KBM-7 (cell line): ENCODE measurements at regions of chr11 and their contacts with region 1.

Region 1: GRCh38 chr11:27183672-27184457 is 143.2 kb downstream of the BBOX1 start:
- DNase-seq: peak; percentile 63

Region 2: GRCh38 chr11:26931248-26931631 is 252.6 kb before region 1 on chr11:
- in situ Hi-C with region 1: no loop called
- DNase-seq: no peak

Region 3: DNA sequence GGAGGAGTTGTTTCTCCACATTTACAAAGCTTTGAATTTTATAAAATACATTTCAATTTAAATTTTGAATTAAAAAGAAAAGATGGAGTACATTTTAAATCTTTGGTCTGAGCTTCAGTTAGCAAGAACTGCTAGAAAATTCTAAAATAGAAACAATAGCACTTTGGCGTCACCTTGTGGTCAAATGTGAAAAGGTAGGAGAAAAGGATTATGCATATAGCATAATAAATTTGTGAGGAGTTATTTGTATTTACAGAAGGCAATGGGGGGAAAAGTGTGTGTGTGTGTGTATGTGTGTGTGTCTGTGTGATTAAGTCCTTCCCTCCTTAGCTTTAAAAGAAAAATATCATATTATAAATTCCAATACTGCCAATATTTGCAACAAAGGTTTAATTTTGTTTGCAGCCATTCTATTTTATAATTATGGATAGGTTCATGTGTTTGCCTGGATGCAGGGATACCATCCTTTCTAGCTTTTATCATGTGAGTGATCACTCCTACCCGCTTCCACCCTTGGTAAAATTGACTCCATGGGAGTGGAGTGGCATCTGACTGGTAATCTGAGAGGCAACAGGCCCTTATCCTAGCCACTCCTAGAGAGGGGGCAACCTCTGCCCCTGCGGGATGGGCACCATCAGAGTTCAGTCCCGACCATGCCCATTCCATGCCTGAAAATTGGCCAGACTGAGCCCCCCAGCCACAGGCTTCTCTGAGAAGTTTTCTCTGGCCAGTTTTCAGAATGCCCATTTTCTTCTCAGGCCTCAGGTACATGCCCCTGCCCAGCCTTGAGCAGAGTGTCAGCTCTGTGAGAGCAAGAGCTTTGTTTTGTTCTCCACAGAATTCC is 302.3 kb after region 1 on chr11:
- in situ Hi-C with region 1: loop called (anchors 25 kb)
- DNase-seq: peak; percentile 70

Region 4: DNA sequence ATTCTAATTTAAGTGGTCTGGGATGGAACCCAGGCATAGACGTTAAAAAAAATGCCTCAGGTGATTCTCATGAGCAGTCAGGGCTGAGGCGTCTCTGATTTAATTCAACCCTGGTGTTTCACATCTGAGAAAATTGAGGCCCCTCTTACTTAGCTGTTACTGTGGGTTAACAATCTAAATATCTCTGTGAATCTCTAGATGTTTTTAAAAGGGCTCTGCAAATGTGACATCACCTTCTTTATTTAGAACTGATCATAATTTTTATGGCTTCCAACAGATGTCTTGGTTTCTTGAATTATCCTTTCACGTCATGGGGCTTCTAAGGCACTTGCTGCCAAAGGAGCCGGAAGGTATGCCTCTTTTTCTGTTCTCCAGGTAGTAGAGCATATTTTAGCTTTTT is 398.8 kb after region 1 on chr11:
- in situ Hi-C with region 1: no loop called
- DNase-seq: no peak